ENCODE measurements at regions of chr4 and their contacts with region 1.

Region 1: GRCh38 chr4:114250439-114250891 is 271.0 kb upstream of the ARSJ start:
- DNase-seq: no peak
- ATAC-seq: no peak
- H3K4me3 ChIP-seq: no peak overlapping the region
- H3K27ac ChIP-seq: no peak overlapping the region
- H3K4me1 ChIP-seq: 0 out of 4 replicates have a peak, but pooled peaks cover 2 to 3% of the 10 kb centered on the region in 2 experiments
- H3K27me3 ChIP-seq: no peaks in the 10 kb centered on the region
- CTCF ChIP-seq: no peak
- POLR2A ChIP-seq: no peak
- RAD21 ChIP-seq: no peak

Region 2: DNA sequence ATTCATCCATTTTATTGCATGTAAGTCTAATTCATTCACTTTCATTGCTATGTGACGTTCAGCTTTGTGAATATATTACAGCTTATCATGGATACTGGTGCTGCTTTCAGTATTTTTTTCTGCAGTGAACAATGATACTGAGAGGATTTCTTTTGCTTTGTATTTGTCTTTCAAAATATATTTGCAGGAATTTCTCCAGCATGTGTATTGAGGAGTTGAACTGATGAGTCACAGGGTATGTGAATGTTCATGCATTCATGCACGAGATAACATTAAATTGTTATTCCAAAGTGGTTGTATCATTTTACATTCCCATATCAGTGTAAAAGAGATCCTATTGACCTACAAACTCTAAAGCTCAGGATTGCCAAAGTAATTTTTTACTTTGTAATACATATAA is 12.8 kb after region 1 on chr4:
- CTCF ChIA-PET with region 1: no interaction called
- POLR2A ChIA-PET with region 1: no interaction called
- RAD21 ChIA-PET with region 1: no interaction called
- intact Hi-C with region 1: loop called (anchors 1 kb)
- DNase-seq: no peak
- ATAC-seq: no peak
- H3K4me3 ChIP-seq: no peak overlapping the region
- H3K27ac ChIP-seq: no peak overlapping the region
- H3K4me1 ChIP-seq: no peaks in the 10 kb centered on the region; a peak in 2 of 4 replicates
- H3K27me3 ChIP-seq: no peaks in the 10 kb centered on the region
- CTCF ChIP-seq: no peak
- POLR2A ChIP-seq: no peak
- RAD21 ChIP-seq: no peak

Measured in HCT116 (cell line).